Pancreas (tissue), 10 donors: ENCODE measurements at regions of chr17 and their contacts with region 1.

Region 1: GRCh38 chr17:34420254-34420766 is 57.3 kb upstream of the CCL1 start:
- DNase-seq: peak; percentile 26 to 76 (median 62)
- ATAC-seq: peak; percentile 67 to 89 (median 86)
- H3K4me3 ChIP-seq: no peak overlapping the region
- H3K27ac ChIP-seq: no peak overlapping the region
- H3K4me1 ChIP-seq: no peaks in the 10 kb centered on the region
- H3K27me3 ChIP-seq: peaks cover 0 to 12% (median 0%) of the 10 kb centered on the region in 4 donors
- CTCF ChIP-seq: peak; percentile 88 to 96 (median 92)

Region 2: GRCh38 chr17:33888455-33888854 is 531.9 kb before region 1 on chr17:
- intact Hi-C with region 1: no loop called
- DNase-seq: no peak
- ATAC-seq: no peak
- H3K4me3 ChIP-seq: no peak overlapping the region
- H3K27ac ChIP-seq: no peak overlapping the region
- H3K4me1 ChIP-seq: no peaks in the 10 kb centered on the region
- H3K27me3 ChIP-seq: no peaks in the 10 kb centered on the region
- CTCF ChIP-seq: no peak

Region 3: DNA sequence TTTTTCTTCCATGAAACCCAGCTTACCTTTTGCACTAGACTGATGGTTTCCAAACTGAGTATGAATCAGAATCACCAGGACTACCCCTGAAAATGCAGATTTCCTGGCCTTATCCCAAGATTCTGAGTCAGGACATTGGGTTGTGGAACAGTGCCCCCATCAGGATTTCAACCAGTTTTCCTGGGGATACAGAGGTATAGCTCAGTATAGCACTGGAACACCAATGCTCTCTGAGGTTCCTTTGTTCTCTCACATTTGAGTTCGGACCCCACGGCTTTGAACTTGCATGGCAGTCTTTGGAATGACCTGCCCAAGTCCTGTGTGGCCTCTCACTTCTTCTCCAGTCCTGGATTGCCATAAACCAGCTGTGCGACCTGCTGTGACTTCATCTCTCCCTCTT is 113.8 kb before region 1 on chr17:
- intact Hi-C with region 1: no loop called
- DNase-seq: peak in 2 of 6 donors; percentile 17 to 23
- ATAC-seq: peak in 3 of 4 donors; percentile 21 to 81 (median 77)
- H3K4me3 ChIP-seq: no peak overlapping the region
- H3K27ac ChIP-seq: no peak overlapping the region
- H3K4me1 ChIP-seq: no peaks in the 10 kb centered on the region
- H3K27me3 ChIP-seq: no peaks in the 10 kb centered on the region
- CTCF ChIP-seq: peak in 1 of 4 donors; percentile 10

Region 4: DNA sequence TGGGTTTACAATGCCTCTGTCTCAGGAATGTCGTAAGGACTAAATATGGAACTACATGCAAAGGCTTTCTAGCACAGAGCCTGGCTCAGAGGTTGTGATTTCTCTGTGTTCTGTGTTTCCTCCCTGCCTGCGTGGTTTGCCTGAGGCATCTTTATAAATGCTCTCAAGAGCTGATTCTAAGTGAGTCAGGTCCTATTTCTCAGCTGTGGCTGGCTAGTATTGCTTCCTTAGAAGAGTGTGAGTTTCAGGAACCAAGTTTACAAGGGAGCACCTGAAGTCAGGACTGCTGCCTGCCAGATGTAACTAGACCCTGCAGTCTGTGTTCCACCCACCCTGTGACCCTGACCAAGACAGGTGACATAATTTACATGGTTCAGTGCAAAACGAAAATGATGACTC is 49.3 kb before region 1 on chr17:
- intact Hi-C with region 1: no loop called
- DNase-seq: no peak
- ATAC-seq: no peak
- H3K4me3 ChIP-seq: no peak overlapping the region
- H3K27ac ChIP-seq: no peak overlapping the region
- H3K4me1 ChIP-seq: no peaks in the 10 kb centered on the region
- H3K27me3 ChIP-seq: no peaks in the 10 kb centered on the region
- CTCF ChIP-seq: no peak

Region 5: GRCh38 chr17:34511265-34511664 is 91.0 kb after region 1 on chr17:
- intact Hi-C with region 1: no loop called
- DNase-seq: no peak
- ATAC-seq: no peak
- H3K4me3 ChIP-seq: no peak overlapping the region
- H3K27ac ChIP-seq: no peak overlapping the region
- H3K4me1 ChIP-seq: no peaks in the 10 kb centered on the region
- H3K27me3 ChIP-seq: no peaks in the 10 kb centered on the region
- CTCF ChIP-seq: no peak

Region 6: GRCh38 chr17:34637548-34638525 is 217.5 kb after region 1 on chr17:
- intact Hi-C with region 1: loop called in 2 of 3 experiments (anchors 2 to 10 kb)
- DNase-seq: peak; percentile 74 to 91 (median 84)
- ATAC-seq: peak; percentile 98 to 99 (median 98)
- H3K4me3 ChIP-seq: peak overlapping the region; percentile 16 to 43 (median 40)
- H3K27ac ChIP-seq: no peak overlapping the region
- H3K4me1 ChIP-seq: no peaks in the 10 kb centered on the region
- H3K27me3 ChIP-seq: no peaks in the 10 kb centered on the region
- CTCF ChIP-seq: peak; percentile 70 to 83 (median 78)

Region 7: DNA sequence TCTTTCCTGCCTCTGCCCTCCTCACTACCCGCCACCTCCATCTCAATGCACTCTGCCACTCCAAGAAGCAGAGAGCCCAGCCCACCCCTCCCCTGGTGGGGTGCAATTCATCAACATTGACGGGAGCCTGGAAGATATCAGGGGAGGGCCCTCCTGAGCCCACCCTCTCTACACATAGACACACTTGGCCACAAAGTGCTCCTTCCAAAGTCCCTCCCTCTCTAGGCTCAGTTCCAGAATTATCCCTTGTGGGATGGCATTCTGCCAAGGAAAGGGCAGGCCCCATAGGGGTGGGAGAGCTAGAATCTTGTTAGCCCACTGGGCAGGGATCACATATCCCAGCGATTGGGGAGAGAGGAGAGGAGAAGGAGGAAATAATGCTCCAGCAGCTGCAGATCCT is 225.3 kb after region 1 on chr17:
- intact Hi-C with region 1: loop called in 1 of 3 experiments (anchors 10 kb)
- DNase-seq: no peak
- ATAC-seq: peak in 1 of 4 donors; percentile 48
- H3K4me3 ChIP-seq: no peak overlapping the region
- H3K27ac ChIP-seq: no peak overlapping the region
- H3K4me1 ChIP-seq: no peaks in the 10 kb centered on the region
- H3K27me3 ChIP-seq: no peaks in the 10 kb centered on the region
- CTCF ChIP-seq: no peak

Region 8: GRCh38 chr17:35119368-35120165 is 699.3 kb after region 1 on chr17 and contains the start of gene RAD51D:
- intact Hi-C with region 1: loop called in 2 of 3 experiments (anchors 5 to 10 kb)
- DNase-seq: peak; percentile 50 to 92 (median 81)
- ATAC-seq: peak; percentile 97 to 98 (median 98)
- H3K4me3 ChIP-seq: peak within 1 kb of the TSS; percentile 61 to 85 (median 80)
- H3K27ac ChIP-seq: peak within 1 kb of the TSS; percentile 30 to 66 (median 52)
- H3K4me1 ChIP-seq: peaks cover 0 to 8% (median 0%) of the 10 kb centered on the region in 3 donors
- H3K27me3 ChIP-seq: no peaks in the 10 kb centered on the region
- CTCF ChIP-seq: peak; percentile 86 to 96 (median 94)
- total RNA-seq, gene RAD51D: 4.4 to 9.4 (median 5.8) TPM